Activated B cell treated with CpG ODN at 0.5 μM for 24 hours (primary cell): ENCODE measurements at regions of chr6 and their contacts with region 1.

Region 1: GRCh38 chr6:24581084-24581669 is 64.8 kb downstream of the KIAA0319 start:
- DNase-seq: peak; percentile 58
- ATAC-seq: peak; percentile 89
- H3K4me3 Mint-ChIP-seq: no peak overlapping the region
- H3K27ac Mint-ChIP-seq: no peak overlapping the region
- H3K4me1 Mint-ChIP-seq: peaks cover 2% of the 10 kb centered on the region
- H3K27me3 Mint-ChIP-seq: no peaks in the 10 kb centered on the region
- CTCF ChIP-seq: peak; percentile 73

Region 2: GRCh38 chr6:24283043-24283985 is 297.9 kb before region 1 on chr6:
- CTCF ChIA-PET with region 1: no interaction called
- POLR2A ChIA-PET with region 1: no interaction called
- intact Hi-C with region 1: loop called (anchors 5 kb)
- DNase-seq: no peak
- ATAC-seq: peak; percentile 40
- H3K4me3 Mint-ChIP-seq: no peak overlapping the region
- H3K27ac Mint-ChIP-seq: no peak overlapping the region
- H3K4me1 Mint-ChIP-seq: no peaks in the 10 kb centered on the region
- H3K27me3 Mint-ChIP-seq: peaks cover 6% of the 10 kb centered on the region
- CTCF ChIP-seq: no peak

Region 3: DNA sequence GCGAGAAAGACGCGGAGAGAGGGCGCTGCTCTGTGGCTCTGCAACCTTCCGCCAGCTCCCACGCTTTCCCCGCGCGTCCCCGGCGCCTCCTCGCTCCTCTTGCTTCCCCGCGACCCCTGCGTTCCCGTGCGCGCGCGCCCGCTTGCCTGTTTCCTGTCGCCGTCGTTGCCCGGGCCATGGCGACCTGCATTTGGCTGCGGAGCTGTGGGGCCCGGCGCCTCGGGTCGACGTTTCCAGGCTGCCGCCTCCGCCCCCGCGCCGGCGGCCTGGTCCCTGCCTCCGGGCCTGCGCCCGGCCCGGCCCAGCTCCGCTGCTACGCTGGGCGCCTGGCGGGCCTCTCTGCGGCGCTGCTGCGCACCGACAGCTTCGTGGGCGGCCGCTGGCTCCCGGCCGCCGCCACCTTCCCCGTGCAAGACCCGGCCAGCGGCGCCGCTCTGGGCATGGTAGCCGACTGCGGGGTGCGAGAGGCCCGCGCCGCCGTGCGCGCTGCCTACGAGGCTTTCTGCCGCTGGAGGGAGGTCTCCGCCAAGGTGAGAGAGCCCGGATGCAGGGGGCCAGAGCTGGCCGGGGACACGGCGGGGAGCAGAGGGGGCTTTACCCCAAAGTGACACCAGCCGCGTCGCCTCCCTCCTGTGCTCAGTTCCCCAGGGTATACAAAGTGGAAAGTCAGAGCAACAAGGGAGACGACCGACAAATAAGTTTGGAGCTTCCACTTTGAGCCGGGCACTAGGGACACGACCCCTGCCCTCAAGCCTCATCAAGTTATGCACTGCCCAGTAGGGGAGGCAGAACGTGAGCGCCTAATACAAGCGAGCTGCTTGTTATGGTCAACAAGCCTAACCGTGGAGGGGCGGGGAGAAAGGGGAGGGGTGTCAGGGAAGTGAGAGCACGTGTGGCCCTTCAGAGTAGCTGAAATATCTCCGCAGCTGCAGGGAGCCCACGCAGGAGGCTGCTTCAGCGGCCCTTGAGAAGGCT is 86.1 kb before region 1 on chr6 and contains the start of gene ALDH5A1:
- CTCF ChIA-PET with region 1: interaction called, 55 read pairs
- POLR2A ChIA-PET with region 1: interaction called, 8 read pairs
- intact Hi-C with region 1: loop called (anchors 1 kb)
- DNase-seq: peak; percentile 75
- ATAC-seq: peak; percentile 75
- H3K4me3 Mint-ChIP-seq: peak within 1 kb of the TSS; percentile 86
- H3K27ac Mint-ChIP-seq: peak within 1 kb of the TSS; percentile 89
- H3K4me1 Mint-ChIP-seq: peaks cover 33% of the 10 kb centered on the region
- H3K27me3 Mint-ChIP-seq: no peaks in the 10 kb centered on the region
- CTCF ChIP-seq: peak; percentile 29
- total RNA-seq, gene ALDH5A1: 15.9 and 17.5 TPM in 2 replicates

Region 4: DNA sequence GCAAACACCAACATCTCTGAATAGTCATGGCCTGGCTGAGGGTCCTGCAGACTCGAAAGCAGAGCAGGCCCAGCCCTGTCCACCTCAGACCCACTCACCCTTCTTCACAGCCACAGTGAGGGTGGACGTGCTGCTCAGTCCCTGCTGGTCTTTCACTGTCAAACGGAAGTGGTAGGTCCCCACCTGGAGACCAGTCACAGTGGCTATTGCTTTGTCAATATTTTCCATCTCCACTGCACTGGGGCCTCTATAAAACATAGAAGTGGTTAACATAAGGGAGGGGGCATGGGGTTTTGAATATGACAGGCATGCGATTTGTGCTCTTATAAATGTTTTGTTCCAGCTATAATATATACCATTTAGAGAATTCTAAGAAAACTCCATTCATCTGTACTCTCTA is 12.5 kb before region 1 on chr6:
- CTCF ChIA-PET with region 1: interaction called, 10 read pairs
- POLR2A ChIA-PET with region 1: no interaction called
- intact Hi-C with region 1: no loop called
- DNase-seq: no peak
- ATAC-seq: no peak
- H3K4me3 Mint-ChIP-seq: no peak overlapping the region
- H3K27ac Mint-ChIP-seq: no peak overlapping the region
- H3K4me1 Mint-ChIP-seq: no peaks in the 10 kb centered on the region
- H3K27me3 Mint-ChIP-seq: no peaks in the 10 kb centered on the region
- CTCF ChIP-seq: no peak

Region 5: DNA sequence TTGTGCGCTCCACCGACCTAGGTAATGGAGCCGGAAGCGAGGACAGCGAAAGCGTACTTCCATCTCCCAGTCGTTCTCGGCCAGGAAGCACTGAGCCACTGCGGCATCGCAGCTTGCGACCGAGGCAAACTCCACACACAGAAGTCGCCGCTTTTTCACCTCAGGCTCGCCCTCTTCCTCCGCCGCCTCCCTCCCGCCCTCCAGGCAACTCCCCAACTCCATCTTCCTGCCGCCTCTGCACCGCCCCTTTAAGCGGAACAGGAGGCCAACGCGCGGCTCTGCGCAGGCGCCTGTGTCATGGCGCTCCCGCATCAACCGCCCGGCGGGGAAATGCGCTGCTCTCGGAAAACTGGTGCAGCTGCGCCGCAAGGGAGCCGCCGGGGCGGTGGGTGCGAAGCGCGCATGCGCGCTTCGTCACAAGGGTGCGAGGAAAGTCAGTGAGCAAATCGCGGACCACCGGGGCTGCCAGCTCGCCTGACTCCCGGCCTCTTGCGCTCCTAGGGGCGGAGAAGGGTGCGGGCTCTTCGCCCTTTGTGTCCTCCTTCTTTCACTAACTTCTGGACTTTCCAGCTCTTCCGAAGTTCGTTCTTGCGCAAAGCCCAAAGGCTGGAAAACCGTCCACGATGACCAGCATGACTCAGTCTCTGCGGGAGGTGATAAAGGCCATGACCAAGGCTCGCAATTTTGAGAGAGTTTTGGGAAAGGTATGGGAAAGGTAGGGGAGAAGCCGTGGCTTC is 85.6 kb after region 1 on chr6 and contains the starts of genes ACOT13 and TDP2:
- CTCF ChIA-PET with region 1: interaction called, 18 read pairs
- POLR2A ChIA-PET with region 1: interaction called, 3 read pairs
- intact Hi-C with region 1: loop called (anchors 1 kb)
- DNase-seq: peak; percentile 92
- ATAC-seq: peak; percentile 94
- H3K4me3 Mint-ChIP-seq: peak within 1 kb of the TSS; percentile 99
- H3K27ac Mint-ChIP-seq: peak within 1 kb of the TSS; percentile 96
- H3K4me1 Mint-ChIP-seq: peaks cover 46% of the 10 kb centered on the region
- H3K27me3 Mint-ChIP-seq: no peaks in the 10 kb centered on the region
- CTCF ChIP-seq: no peak
- total RNA-seq, gene ACOT13: 12.0 and 13.8 TPM in 2 replicates
- total RNA-seq, gene TDP2: 48.9 and 51.1 TPM in 2 replicates

Region 6: GRCh38 chr6:24702720-24703282 is 121.6 kb after region 1 on chr6:
- CTCF ChIA-PET with region 1: interaction called, 82 read pairs
- POLR2A ChIA-PET with region 1: no interaction called
- intact Hi-C with region 1: no loop called
- DNase-seq: no peak
- ATAC-seq: no peak
- H3K4me3 Mint-ChIP-seq: no peak overlapping the region
- H3K27ac Mint-ChIP-seq: peak overlapping the region; percentile 50
- H3K4me1 Mint-ChIP-seq: peaks cover 21% of the 10 kb centered on the region
- H3K27me3 Mint-ChIP-seq: no peaks in the 10 kb centered on the region
- CTCF ChIP-seq: no peak

Region 7: GRCh38 chr6:25017932-25018567 is 436.9 kb after region 1 on chr6:
- CTCF ChIA-PET with region 1: interaction called, 4 read pairs
- POLR2A ChIA-PET with region 1: no interaction called
- intact Hi-C with region 1: loop called (anchors 5 kb)
- DNase-seq: no peak
- ATAC-seq: peak; percentile 68
- H3K4me3 Mint-ChIP-seq: peak overlapping the region; percentile 32
- H3K27ac Mint-ChIP-seq: peak overlapping the region; percentile 70
- H3K4me1 Mint-ChIP-seq: peaks cover 56% of the 10 kb centered on the region
- H3K27me3 Mint-ChIP-seq: no peaks in the 10 kb centered on the region
- CTCF ChIP-seq: no peak